Endothelial cell of umbilical vein (primary cell): ENCODE measurements at regions of chr3 and their contacts with region 1.

Region 1: DNA sequence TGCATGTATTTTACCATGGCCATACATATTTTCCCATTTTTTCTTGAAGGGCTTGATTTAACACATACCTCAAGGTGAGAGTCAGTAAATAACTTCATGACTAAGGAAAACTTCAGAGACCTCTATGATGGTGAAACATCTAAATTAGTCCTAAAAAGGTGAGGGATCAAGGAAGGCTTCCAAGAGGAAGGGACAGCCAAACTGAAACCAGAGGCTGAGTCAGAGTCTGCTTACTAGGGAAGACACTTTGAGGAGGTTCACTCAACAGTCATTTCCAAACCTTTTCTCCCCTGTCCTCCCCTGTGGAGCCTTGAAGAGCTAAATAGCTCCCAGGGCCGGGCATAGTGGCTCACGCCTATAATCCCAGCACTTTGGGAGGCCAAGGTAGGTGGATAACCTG is 206.6 kb downstream of the SHQ1 start:
- DNase-seq: no peak
- H3K4me3 ChIP-seq: no peak overlapping the region
- H3K27ac ChIP-seq: no peak overlapping the region
- H3K4me1 ChIP-seq: no peaks in the 10 kb centered on the region
- H3K27me3 ChIP-seq: no peaks in the 10 kb centered on the region
- CTCF ChIP-seq: no peak
- POLR2A ChIP-seq: no peak

Region 2: GRCh38 chr3:72694398-72694797 is 52.7 kb after region 1 on chr3:
- CTCF ChIA-PET with region 1: no interaction called
- POLR2A ChIA-PET with region 1: no interaction called
- dilution Hi-C with region 1: loop called (anchors 10 kb)
- intact Hi-C with region 1: no loop called
- DNase-seq: no peak
- H3K4me3 ChIP-seq: no peak overlapping the region
- H3K27ac ChIP-seq: no peak overlapping the region
- H3K4me1 ChIP-seq: no peaks in the 10 kb centered on the region
- H3K27me3 ChIP-seq: peaks cover 0 to 2% of the 10 kb centered on the region in 2 experiments
- CTCF ChIP-seq: no peak
- POLR2A ChIP-seq: no peak

Region 3: GRCh38 chr3:72816862-72817355 is 175.2 kb after region 1 on chr3:
- CTCF ChIA-PET with region 1: no interaction called
- POLR2A ChIA-PET with region 1: no interaction called
- dilution Hi-C with region 1: no loop called
- intact Hi-C with region 1: no loop called
- DNase-seq: no peak
- H3K4me3 ChIP-seq: no peak overlapping the region
- H3K27ac ChIP-seq: no peak overlapping the region
- H3K4me1 ChIP-seq: peaks cover 21% of the 10 kb centered on the region
- H3K27me3 ChIP-seq: no peaks in the 10 kb centered on the region
- CTCF ChIP-seq: no peak
- POLR2A ChIP-seq: no peak